ENCODE measurements at regions of chr9 and their contacts with region 1.

Region 1: GRCh38 chr9:71911253-71912074 is at the start of gene C9orf85:
- DNase-seq: peak; percentile 98
- ATAC-seq: peak; percentile 94
- H3K4me3 Mint-ChIP-seq: peak within 1 kb of the TSS; percentile 98
- H3K27ac Mint-ChIP-seq: peak within 1 kb of the TSS; percentile 94
- H3K4me1 Mint-ChIP-seq: peaks cover 59% of the 10 kb centered on the region
- H3K27me3 Mint-ChIP-seq: no peaks in the 10 kb centered on the region
- total RNA-seq, gene C9orf85: 10.2 to 10.4 TPM

Region 2: DNA sequence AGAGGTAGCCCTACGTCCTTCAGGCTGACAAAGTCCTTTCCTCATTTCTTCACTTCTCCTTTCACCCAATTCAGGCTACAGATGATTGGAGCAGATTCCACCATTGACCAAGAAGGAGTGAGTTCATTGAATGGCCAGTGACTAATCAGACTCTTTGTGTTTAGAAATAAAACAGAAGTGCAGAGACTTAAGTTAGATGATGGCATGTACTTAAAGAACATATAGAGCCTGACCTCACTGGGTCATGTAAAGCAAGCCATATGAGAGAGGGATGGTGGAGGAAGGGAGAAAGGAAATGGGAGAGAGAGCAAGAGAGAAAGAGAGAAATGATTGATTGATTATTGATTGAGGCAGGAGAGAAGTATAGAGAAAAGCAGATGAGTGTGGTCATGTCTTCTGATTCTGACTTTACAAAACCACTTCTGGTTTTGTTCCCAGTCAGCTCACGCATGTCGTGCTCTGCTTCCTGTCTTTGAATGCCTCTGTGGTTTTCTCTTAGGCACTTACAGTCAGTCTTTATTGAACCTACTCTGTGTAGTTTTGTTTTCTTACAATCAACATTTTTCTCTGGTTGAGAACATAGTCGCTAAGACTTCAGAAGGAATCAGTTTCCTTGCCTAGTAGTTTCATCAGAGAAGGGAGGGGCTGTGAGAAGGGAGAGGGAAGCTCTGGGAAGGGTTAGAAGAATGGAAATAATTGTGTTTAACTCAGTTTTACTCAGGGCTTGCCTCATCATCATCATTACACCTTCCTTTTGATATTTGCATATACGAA is 1347.8 kb before region 1 on chr9:
- CTCF ChIA-PET with region 1: no interaction called
- POLR2A ChIA-PET with region 1: no interaction called
- intact Hi-C with region 1: loop called in 1 of 2 experiments (anchors 10 kb)
- DNase-seq: peak; percentile 72
- ATAC-seq: peak; percentile 93
- H3K4me3 Mint-ChIP-seq: peak overlapping the region; percentile 40
- H3K27ac Mint-ChIP-seq: peak overlapping the region; percentile 95
- H3K4me1 Mint-ChIP-seq: peaks cover 45% of the 10 kb centered on the region
- H3K27me3 Mint-ChIP-seq: no peaks in the 10 kb centered on the region

Region 3: DNA sequence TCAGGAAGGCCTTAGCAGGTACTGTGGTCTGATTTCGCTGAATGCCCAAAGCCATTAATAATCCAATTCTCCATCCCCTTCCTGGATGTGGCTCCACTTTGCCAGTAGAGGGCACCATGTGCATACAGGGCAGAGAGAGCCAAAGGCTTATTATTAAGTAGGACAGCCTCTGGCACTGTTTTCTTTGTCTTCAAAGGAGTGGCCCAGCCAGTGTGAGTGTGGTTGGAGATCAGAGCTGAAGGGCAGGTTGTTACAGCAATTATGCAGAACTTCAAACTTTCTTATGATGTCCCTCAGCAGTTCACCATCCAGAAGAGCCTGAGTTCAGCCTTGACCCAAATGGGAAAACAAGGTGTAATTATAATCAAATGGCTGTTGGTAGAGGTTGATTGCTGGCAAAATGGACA is 104.6 kb before region 1 on chr9:
- CTCF ChIA-PET with region 1: interaction called, 9 read pairs
- POLR2A ChIA-PET with region 1: no interaction called
- intact Hi-C with region 1: loop called in 1 of 2 experiments (anchors 1 kb)
- DNase-seq: peak; percentile 74
- ATAC-seq: peak; percentile 97
- H3K4me3 Mint-ChIP-seq: no peak overlapping the region
- H3K27ac Mint-ChIP-seq: no peak overlapping the region
- H3K4me1 Mint-ChIP-seq: peaks cover 8% of the 10 kb centered on the region
- H3K27me3 Mint-ChIP-seq: no peaks in the 10 kb centered on the region

Region 4: GRCh38 chr9:71858812-71859211 is 52.7 kb before region 1 on chr9:
- CTCF ChIA-PET with region 1: no interaction called
- POLR2A ChIA-PET with region 1: no interaction called
- intact Hi-C with region 1: loop called (anchors 2 kb)
- DNase-seq: no peak
- ATAC-seq: peak; percentile 96
- H3K4me3 Mint-ChIP-seq: no peak overlapping the region
- H3K27ac Mint-ChIP-seq: peak overlapping the region; percentile 40
- H3K4me1 Mint-ChIP-seq: peaks cover 18% of the 10 kb centered on the region
- H3K27me3 Mint-ChIP-seq: no peaks in the 10 kb centered on the region

Region 5: DNA sequence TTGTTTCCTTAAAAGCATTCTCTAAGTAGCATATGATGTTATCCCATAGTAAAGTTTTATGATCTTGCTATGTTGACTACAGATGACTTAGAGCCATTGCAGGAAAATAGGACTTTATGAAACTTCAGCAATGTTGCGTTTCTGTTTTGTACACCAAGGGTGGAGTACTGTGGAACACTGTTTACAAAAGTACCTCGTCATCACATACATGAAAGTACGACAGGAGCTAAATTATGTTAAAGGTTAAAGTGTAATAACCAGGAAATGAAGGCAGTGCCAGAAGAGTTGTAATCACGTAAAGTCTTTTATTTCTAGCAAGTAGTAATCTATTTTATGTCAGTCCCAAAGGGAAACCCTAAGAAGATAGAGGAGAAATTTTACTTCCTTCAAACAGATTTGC is 50.9 kb after region 1 on chr9:
- CTCF ChIA-PET with region 1: no interaction called
- POLR2A ChIA-PET with region 1: no interaction called
- intact Hi-C with region 1: no loop called
- DNase-seq: no peak
- ATAC-seq: no peak
- H3K4me3 Mint-ChIP-seq: no peak overlapping the region
- H3K27ac Mint-ChIP-seq: no peak overlapping the region
- H3K4me1 Mint-ChIP-seq: no peaks in the 10 kb centered on the region
- H3K27me3 Mint-ChIP-seq: no peaks in the 10 kb centered on the region

Region 6: GRCh38 chr9:72526901-72527800 is 615.7 kb after region 1 on chr9:
- CTCF ChIA-PET with region 1: no interaction called
- POLR2A ChIA-PET with region 1: no interaction called
- intact Hi-C with region 1: loop called in 1 of 2 experiments (anchors 10 kb)
- DNase-seq: peak; percentile 90
- ATAC-seq: peak; percentile 88
- H3K4me3 Mint-ChIP-seq: peak overlapping the region; percentile 69
- H3K27ac Mint-ChIP-seq: peak overlapping the region; percentile 94
- H3K4me1 Mint-ChIP-seq: peaks cover 43% of the 10 kb centered on the region
- H3K27me3 Mint-ChIP-seq: no peaks in the 10 kb centered on the region